Activated T-helper 1 cell treated with anti-CD3 and anti-CD28 coated beads, Interleukin-12 subunit alpha, Interleukin-12 subunit beta, Interleukin-2, Interleukin-4 antibody, amounts not matched to agents 30 ng/mL and 10 ng/mL and 1 ng/mL, durations not matched to agents 14 hours and 24 hours and 36 hours (primary cell): ENCODE measurements at regions of chr11 and their contacts with region 1.

Region 1: GRCh38 chr11:107573438-107573837 is 7.9 kb upstream of the ALKBH8 start:
- DNase-seq: no peak
- H3K4me3 Mint-ChIP-seq: no peak overlapping the region
- H3K27ac Mint-ChIP-seq: no peak overlapping the region
- H3K4me1 Mint-ChIP-seq: no peaks in the 10 kb centered on the region
- H3K27me3 Mint-ChIP-seq: peaks cover 4% of the 10 kb centered on the region

Region 2: GRCh38 chr11:107293677-107294344 is 279.6 kb before region 1 on chr11:
- intact Hi-C with region 1: no loop called
- DNase-seq: no peak
- H3K4me3 Mint-ChIP-seq: no peak overlapping the region
- H3K27ac Mint-ChIP-seq: no peak overlapping the region
- H3K4me1 Mint-ChIP-seq: no peaks in the 10 kb centered on the region
- H3K27me3 Mint-ChIP-seq: no peaks in the 10 kb centered on the region

Region 3: DNA sequence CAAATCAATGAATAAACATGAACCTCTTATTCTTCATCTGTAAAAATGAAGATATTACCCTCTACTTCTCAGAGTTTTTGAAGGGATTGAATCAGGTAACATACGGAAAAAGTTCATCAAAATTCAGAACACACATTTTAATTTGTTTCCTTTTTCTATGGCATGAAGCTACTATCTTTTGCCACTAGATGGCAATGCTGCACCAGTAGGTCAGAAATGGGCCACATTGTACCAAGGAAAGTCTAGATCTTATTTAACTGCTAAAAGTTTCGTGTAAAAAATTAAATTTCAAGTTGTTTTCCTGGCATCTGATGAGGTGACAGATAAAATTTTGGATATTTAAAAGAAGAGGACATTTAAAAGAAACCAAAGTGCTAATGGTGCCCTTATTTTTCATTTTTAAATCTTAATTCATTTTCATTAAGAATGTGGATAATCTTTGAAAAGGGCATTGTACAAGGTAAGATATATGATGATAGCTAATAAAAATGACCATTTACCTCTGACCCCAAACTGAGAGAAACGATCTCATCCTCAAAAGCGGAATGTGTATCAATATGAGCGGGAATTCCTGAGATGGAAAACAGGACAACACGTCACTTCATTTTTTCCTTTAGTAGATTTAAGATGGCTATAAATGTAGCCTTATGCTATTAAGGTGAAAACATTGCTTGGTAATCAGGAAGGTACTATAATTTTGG is 24.0 kb before region 1 on chr11:
- intact Hi-C with region 1: loop called (anchors 1 kb)
- DNase-seq: no peak
- H3K4me3 Mint-ChIP-seq: no peak overlapping the region
- H3K27ac Mint-ChIP-seq: no peak overlapping the region
- H3K4me1 Mint-ChIP-seq: peaks cover 3% of the 10 kb centered on the region
- H3K27me3 Mint-ChIP-seq: no peaks in the 10 kb centered on the region

Region 4: GRCh38 chr11:107590460-107591377 is 17.3 kb after region 1 on chr11 and contains the start of gene ELMOD1:
- intact Hi-C with region 1: loop called (anchors 1 kb)
- DNase-seq: peak; percentile 2
- H3K4me3 Mint-ChIP-seq: peak within 1 kb of the TSS; percentile 85
- H3K27ac Mint-ChIP-seq: peak within 1 kb of the TSS; percentile 56
- H3K4me1 Mint-ChIP-seq: peaks cover 26% of the 10 kb centered on the region
- H3K27me3 Mint-ChIP-seq: peaks cover 84% of the 10 kb centered on the region
- total RNA-seq, gene ELMOD1: not detected in 2 replicates

Region 5: GRCh38 chr11:107689317-107690202 is 116.1 kb after region 1 on chr11:
- intact Hi-C with region 1: loop called (anchors 1 kb)
- DNase-seq: peak; percentile 33
- H3K4me3 Mint-ChIP-seq: no peak overlapping the region
- H3K27ac Mint-ChIP-seq: no peak overlapping the region
- H3K4me1 Mint-ChIP-seq: no peaks in the 10 kb centered on the region
- H3K27me3 Mint-ChIP-seq: peaks cover 10% of the 10 kb centered on the region

Region 6: DNA sequence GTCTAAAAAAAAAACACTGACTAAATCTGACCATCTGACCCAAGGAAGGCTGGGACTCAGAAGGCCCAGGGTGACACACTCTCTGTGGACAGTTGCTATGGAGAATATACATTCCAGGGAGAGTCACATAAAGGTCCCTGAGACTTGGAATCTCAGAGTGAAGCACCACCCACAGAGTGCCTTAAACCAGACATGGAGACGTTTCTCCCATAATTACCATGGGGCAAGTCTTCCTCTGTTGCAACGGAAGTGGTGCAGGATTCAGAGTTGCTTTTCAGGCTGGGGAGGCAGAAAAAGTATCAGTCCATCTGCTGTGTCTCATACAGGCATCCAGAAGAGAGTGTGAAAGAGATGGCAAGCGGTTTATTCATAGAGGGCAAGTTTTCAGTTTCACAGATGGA is 197.1 kb after region 1 on chr11:
- intact Hi-C with region 1: loop called (anchors 1 kb)
- DNase-seq: no peak
- H3K4me3 Mint-ChIP-seq: no peak overlapping the region
- H3K27ac Mint-ChIP-seq: no peak overlapping the region
- H3K4me1 Mint-ChIP-seq: peaks cover 4% of the 10 kb centered on the region
- H3K27me3 Mint-ChIP-seq: peaks cover 7% of the 10 kb centered on the region

Region 7: DNA sequence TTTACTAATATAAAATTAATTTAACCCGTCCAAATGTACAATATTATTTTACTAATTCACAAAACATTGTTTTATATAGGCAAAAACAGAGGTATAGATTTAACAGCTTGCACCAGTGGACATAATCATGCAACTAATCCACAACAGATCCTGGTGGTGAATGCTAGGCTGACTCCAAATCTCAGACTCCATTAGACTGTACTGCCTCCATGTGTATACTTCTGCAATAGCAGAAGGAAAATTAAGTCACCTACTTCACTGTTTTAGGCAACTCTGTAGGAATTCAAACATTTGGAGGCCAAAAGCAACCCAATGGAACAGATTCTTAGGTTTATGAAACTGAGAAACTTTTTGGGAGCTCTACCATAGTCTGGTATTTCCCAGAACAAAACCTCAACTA is 324.8 kb after region 1 on chr11:
- intact Hi-C with region 1: loop called (anchors 2 kb)
- DNase-seq: no peak
- H3K4me3 Mint-ChIP-seq: no peak overlapping the region
- H3K27ac Mint-ChIP-seq: no peak overlapping the region
- H3K4me1 Mint-ChIP-seq: no peaks in the 10 kb centered on the region
- H3K27me3 Mint-ChIP-seq: peaks cover 4% of the 10 kb centered on the region

Region 8: DNA sequence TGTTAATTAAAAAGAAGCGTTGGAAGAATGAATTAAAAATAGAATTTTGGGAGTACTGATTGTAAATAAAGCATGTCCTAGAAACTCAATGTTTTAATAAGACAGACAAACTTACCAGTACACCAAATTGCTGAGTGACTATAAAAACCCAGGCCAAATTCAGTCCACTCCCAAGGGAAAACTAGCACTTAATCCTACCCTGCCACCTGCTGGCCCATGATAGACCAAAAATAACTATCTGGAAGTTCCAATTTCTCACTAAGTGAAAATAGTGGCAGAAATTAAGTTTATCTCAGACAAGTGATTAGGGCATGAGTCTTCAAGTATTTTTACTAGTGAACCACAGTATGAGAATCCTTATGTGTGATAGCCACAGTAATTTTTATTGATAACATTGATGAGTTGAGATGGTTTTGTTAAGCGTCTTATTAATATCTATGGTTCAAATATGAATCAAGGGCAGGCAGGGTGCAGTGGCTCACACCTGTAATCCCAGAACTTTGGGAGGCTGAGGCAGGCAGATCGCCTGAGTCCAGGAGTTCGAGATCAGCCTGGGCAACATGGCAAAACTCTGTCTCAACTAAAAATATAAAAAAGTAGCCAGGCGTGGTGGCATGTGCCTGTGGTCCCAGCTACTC is 1081.7 kb after region 1 on chr11:
- intact Hi-C with region 1: loop called (anchors 1 kb)
- DNase-seq: no peak
- H3K4me3 Mint-ChIP-seq: no peak overlapping the region
- H3K27ac Mint-ChIP-seq: no peak overlapping the region
- H3K4me1 Mint-ChIP-seq: no peaks in the 10 kb centered on the region
- H3K27me3 Mint-ChIP-seq: peaks cover 15% of the 10 kb centered on the region